Naive thymus-derived CD4-positive, alpha-beta T cell (primary cell): ENCODE measurements at regions of chr22 and their contacts with region 1.

Region 1: GRCh38 chr22:38843201-38843715 is 570 bp downstream of the NPTXR start:
- DNase-seq: peak; percentile 35 to 67 (median 61)
- ATAC-seq: peak; percentile 89
- H3K4me3 ChIP-seq: peak overlapping the region; percentile 50
- H3K4me3 Mint-ChIP-seq: peak overlapping the region in 4 of 10 donors; percentile 37 to 90 (median 74)
- H3K27ac ChIP-seq: no peak overlapping the region
- H3K27ac Mint-ChIP-seq: peak overlapping the region in 1 of 9 donors; percentile 62
- H3K4me1 ChIP-seq: peaks cover 0 to 14% of the 10 kb centered on the region in 2 donors
- H3K4me1 Mint-ChIP-seq: peaks cover 9 to 40% (median 35%) of the 10 kb centered on the region in 7 donors
- H3K27me3 ChIP-seq: no peaks in the 10 kb centered on the region
- H3K27me3 Mint-ChIP-seq: peaks cover 0 to 69% (median 0%) of the 10 kb centered on the region in 5 donors

Region 2: GRCh38 chr22:38614332-38615063 is 228.8 kb before region 1 on chr22:
- CTCF ChIA-PET with region 1: no interaction called
- POLR2A ChIA-PET with region 1: no interaction called
- intact Hi-C with region 1: no loop called
- DNase-seq: no peak
- ATAC-seq: no peak
- H3K4me3 ChIP-seq: no peak overlapping the region
- H3K4me3 Mint-ChIP-seq: no peak overlapping the region
- H3K27ac ChIP-seq: no peak overlapping the region
- H3K27ac Mint-ChIP-seq: no peak overlapping the region
- H3K4me1 ChIP-seq: no peaks in the 10 kb centered on the region
- H3K4me1 Mint-ChIP-seq: peaks cover 0 to 2% (median 0%) of the 10 kb centered on the region in 7 donors
- H3K27me3 ChIP-seq: no peaks in the 10 kb centered on the region
- H3K27me3 Mint-ChIP-seq: peaks cover 0 to 24% (median 5%) of the 10 kb centered on the region in 5 donors

Region 3: GRCh38 chr22:38724926-38725571 is 118.2 kb before region 1 on chr22:
- CTCF ChIA-PET with region 1: interaction called, 3 read pairs
- POLR2A ChIA-PET with region 1: interaction called, 3 read pairs
- intact Hi-C with region 1: loop called in 1 of 2 experiments (anchors 1 kb)
- DNase-seq: peak in 7 of 9 donors; percentile 33 to 63 (median 50)
- ATAC-seq: peak; percentile 86
- H3K4me3 ChIP-seq: no peak overlapping the region
- H3K4me3 Mint-ChIP-seq: peak overlapping the region in 1 of 10 donors; percentile 15
- H3K27ac ChIP-seq: peak overlapping the region; percentile 8
- H3K27ac Mint-ChIP-seq: peak overlapping the region in 8 of 9 donors; percentile 50 to 91 (median 76)
- H3K4me1 ChIP-seq: no peaks in the 10 kb centered on the region
- H3K4me1 Mint-ChIP-seq: peaks cover 5 to 25% (median 11%) of the 10 kb centered on the region in 7 donors
- H3K27me3 ChIP-seq: no peaks in the 10 kb centered on the region
- H3K27me3 Mint-ChIP-seq: no peaks in the 10 kb centered on the region

Region 4: GRCh38 chr22:38733329-38733723 is 109.9 kb before region 1 on chr22:
- CTCF ChIA-PET with region 1: interaction called, 4 read pairs
- POLR2A ChIA-PET with region 1: interaction called, 35 read pairs
- intact Hi-C with region 1: loop called in 1 of 2 experiments (anchors 2 kb)
- DNase-seq: peak in 5 of 9 donors; percentile 37 to 55 (median 49)
- ATAC-seq: peak; percentile 67
- H3K4me3 ChIP-seq: no peak overlapping the region
- H3K4me3 Mint-ChIP-seq: peak overlapping the region in 4 of 10 donors; percentile 11 to 51 (median 40)
- H3K27ac ChIP-seq: peak overlapping the region; percentile 54
- H3K27ac Mint-ChIP-seq: peak overlapping the region; percentile 76 to 91 (median 87)
- H3K4me1 ChIP-seq: peaks cover 15 to 18% of the 10 kb centered on the region in 2 donors
- H3K4me1 Mint-ChIP-seq: peaks cover 25 to 63% (median 53%) of the 10 kb centered on the region in 7 donors
- H3K27me3 ChIP-seq: no peaks in the 10 kb centered on the region
- H3K27me3 Mint-ChIP-seq: no peaks in the 10 kb centered on the region

Region 5: DNA sequence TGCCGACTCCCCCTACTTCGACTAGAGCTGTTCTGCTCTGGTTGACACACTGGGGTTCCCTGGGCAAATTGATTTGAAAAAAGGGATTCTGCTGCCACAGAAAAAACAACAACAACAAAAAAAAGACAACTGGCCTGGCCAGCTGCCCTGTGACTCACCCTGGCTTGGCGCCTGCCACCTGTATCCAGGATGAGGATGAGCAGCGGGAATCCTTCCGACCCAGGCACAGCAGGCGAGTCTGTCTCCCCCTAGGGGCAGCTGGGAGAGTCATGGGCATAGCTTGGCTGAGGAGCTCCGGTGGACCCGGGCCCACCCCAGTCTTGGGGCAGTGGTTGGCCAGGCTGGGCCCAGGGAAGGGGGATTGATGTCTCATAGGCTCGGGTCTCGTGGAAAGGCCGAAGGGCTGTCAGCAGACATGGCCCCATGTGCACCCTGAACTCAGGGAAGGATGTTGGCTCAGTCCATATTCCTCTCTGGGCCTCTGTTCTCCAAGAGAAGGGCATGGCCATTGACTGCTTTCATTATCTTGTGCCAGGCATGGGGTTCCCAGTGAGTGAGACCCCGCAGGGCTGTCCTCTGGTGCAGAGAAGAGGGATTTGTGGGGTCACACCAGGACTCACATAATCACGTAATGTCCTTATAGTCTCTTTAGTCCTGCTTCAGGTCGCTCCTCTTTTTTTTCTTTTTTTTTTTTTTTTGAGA is 77.0 kb before region 1 on chr22:
- CTCF ChIA-PET with region 1: interaction called, 14 read pairs
- POLR2A ChIA-PET with region 1: interaction called, 5 read pairs
- intact Hi-C with region 1: loop called in 1 of 2 experiments (anchors 1 kb)
- DNase-seq: peak in 6 of 9 donors; percentile 32 to 48 (median 38)
- ATAC-seq: peak; percentile 69
- H3K4me3 ChIP-seq: no peak overlapping the region
- H3K4me3 Mint-ChIP-seq: no peak overlapping the region
- H3K27ac ChIP-seq: no peak overlapping the region
- H3K27ac Mint-ChIP-seq: peak overlapping the region in 5 of 9 donors; percentile 12 to 42 (median 19)
- H3K4me1 ChIP-seq: no peaks in the 10 kb centered on the region
- H3K4me1 Mint-ChIP-seq: peaks cover 4 to 10% (median 9%) of the 10 kb centered on the region in 7 donors
- H3K27me3 ChIP-seq: no peaks in the 10 kb centered on the region
- H3K27me3 Mint-ChIP-seq: no peaks in the 10 kb centered on the region

Region 6: DNA sequence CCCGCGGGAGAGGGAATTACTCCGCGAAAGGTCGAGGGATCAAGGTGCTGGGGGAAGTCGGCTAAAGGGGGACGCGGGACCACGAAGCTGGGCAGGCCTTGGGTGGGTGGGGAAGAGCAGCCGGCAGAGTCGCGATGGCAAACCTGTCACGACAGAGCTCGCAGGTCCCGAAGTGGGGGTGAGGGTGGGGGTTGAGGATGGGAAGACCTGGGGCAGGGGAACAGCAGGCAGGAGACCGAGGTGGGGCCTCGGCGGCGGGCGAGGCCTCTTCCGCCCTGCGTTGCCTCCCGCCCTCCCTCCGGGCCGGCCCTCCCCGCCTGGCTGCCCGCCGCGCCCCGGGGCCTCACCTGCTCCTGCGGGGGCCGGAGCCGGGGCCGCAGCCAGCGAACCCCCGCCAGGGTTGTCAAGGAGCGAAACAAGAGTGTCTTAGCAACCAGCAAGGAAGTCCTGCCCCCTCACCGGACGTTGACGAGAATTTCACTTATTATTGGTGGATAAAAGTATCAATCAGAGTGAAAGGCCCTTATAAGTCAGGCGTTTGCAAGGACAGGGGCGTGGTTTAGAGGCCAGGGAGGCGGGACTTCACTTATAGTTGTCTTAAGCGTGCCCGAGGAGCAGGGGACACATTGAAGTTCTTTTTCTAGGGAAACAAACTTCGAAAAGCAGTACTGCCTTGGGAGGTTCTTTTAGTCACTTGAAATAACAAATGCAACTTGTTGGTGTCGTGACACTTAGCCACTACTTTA is 49.4 kb before region 1 on chr22 and contains the start of gene DNAL4:
- CTCF ChIA-PET with region 1: interaction called, 4 read pairs
- POLR2A ChIA-PET with region 1: no interaction called
- intact Hi-C with region 1: loop called in 1 of 2 experiments (anchors 1 kb)
- DNase-seq: peak; percentile 64 to 95 (median 93)
- ATAC-seq: peak; percentile 99
- H3K4me3 ChIP-seq: peak within 1 kb of the TSS; percentile 75
- H3K4me3 Mint-ChIP-seq: peak within 1 kb of the TSS; percentile 86 to 97 (median 92)
- H3K27ac ChIP-seq: peak within 1 kb of the TSS; percentile 89
- H3K27ac Mint-ChIP-seq: peak within 1 kb of the TSS; percentile 78 to 96 (median 91)
- H3K4me1 ChIP-seq: peaks cover 13 to 26% of the 10 kb centered on the region in 2 donors
- H3K4me1 Mint-ChIP-seq: peaks cover 20 to 44% (median 34%) of the 10 kb centered on the region in 7 donors
- H3K27me3 ChIP-seq: no peaks in the 10 kb centered on the region
- H3K27me3 Mint-ChIP-seq: peaks cover 0 to 27% (median 0%) of the 10 kb centered on the region in 5 donors
- total RNA-seq, gene DNAL4: 5.0 to 11.1 (median 8.9) TPM